Activated CD4-positive, alpha-beta memory T cell treated with anti-CD3 and anti-CD28 coated beads, Interleukin-2, amount 10 ng/mL, durations not matched to agents 7 days and 5 days (primary cell): ENCODE measurements at regions of chr6 and their contacts with region 1.

Region 1: GRCh38 chr6:36851149-36851614 is 11.9 kb upstream of the CPNE5 start:
- DNase-seq: peak; percentile 46
- H3K4me3 Mint-ChIP-seq: no peak overlapping the region
- H3K27ac Mint-ChIP-seq: no peak overlapping the region
- H3K4me1 Mint-ChIP-seq: peaks cover 5% of the 10 kb centered on the region
- H3K27me3 Mint-ChIP-seq: no peaks in the 10 kb centered on the region

Region 2: DNA sequence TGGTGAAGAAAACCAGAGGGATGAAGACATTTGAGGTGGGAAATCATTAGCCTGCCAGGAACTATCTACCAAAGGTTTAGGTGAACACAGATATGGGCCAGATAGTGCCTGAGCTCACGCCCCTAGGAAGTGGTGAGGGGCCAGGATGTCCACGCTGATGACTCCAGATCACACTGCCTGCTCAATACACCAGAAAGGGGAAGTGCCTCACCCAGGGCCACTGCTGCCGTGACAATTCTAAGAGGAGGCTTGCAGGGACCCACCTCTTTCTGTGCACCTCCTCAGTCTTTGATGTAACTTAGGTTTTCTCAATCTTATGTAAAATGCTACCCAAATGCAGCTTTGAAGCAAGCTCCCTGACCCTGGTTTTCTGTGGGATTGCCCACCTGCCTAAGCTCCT is 159.0 kb before region 1 on chr6:
- CTCF ChIA-PET with region 1: no interaction called
- POLR2A ChIA-PET with region 1: no interaction called
- DNase-seq: peak; percentile 82
- H3K4me3 Mint-ChIP-seq: peak overlapping the region; percentile 8
- H3K27ac Mint-ChIP-seq: peak overlapping the region; percentile 86
- H3K4me1 Mint-ChIP-seq: peaks cover 68% of the 10 kb centered on the region
- H3K27me3 Mint-ChIP-seq: no peaks in the 10 kb centered on the region

Region 3: GRCh38 chr6:36834576-36835341 is 16.4 kb before region 1 on chr6:
- CTCF ChIA-PET with region 1: interaction called, 12 read pairs
- POLR2A ChIA-PET with region 1: interaction called, 5 read pairs
- DNase-seq: no peak
- H3K4me3 Mint-ChIP-seq: no peak overlapping the region
- H3K27ac Mint-ChIP-seq: no peak overlapping the region
- H3K4me1 Mint-ChIP-seq: peaks cover 4% of the 10 kb centered on the region
- H3K27me3 Mint-ChIP-seq: peaks cover 28% of the 10 kb centered on the region

Region 4: DNA sequence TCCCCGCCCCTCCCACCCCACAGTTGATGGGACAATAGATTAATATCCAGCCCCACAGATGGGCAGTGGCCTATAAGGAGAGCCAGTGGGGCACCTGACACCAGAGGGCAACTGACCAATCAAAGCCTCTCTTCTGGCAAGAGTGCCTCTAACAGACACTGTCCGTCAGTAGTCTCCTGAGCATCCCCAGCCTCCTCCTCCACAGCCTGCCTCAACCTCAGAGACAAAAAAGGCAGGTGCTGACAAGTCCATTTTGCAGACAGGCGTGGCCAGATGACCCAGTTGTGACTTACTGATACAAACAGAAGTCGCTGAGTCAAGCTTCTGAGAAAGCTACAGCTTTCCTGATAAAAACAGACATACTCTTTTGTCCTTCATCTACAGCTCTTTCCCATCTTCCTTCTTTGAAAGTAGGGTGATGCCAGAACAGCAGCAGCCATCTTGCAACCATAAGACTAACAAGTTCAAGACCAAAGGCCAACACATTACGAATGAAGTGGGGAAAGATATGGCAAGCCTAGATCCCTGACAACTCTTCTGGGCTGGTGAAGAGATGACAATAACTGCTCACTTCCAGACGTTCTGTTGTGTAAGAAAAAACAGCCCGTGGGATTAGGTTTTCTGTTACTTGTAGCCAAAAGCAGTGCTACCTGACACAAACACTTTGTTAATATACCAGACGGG is 11.1 kb after region 1 on chr6:
- CTCF ChIA-PET with region 1: interaction called, 16 read pairs
- POLR2A ChIA-PET with region 1: interaction called, 6 read pairs
- DNase-seq: peak; percentile 31
- H3K4me3 Mint-ChIP-seq: no peak overlapping the region
- H3K27ac Mint-ChIP-seq: peak overlapping the region; percentile 71
- H3K4me1 Mint-ChIP-seq: peaks cover 58% of the 10 kb centered on the region
- H3K27me3 Mint-ChIP-seq: no peaks in the 10 kb centered on the region

Region 5: DNA sequence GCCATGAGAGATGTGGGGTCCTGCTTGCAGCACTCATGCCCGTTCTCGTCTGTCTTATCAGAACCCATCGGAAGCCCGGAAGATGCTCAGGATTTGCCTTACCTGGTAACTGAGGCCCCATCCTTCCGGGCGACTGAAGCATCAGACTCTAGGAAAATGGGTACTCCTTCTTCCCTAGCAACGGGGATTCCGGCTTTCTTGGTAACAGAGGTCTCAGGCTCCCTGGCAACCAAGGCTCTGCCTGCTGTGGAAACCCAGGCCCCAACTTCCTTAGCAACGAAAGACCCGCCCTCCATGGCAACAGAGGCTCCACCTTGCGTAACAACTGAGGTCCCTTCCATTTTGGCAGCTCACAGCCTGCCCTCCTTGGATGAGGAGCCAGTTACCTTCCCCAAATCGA is 111.7 kb after region 1 on chr6:
- CTCF ChIA-PET with region 1: no interaction called
- POLR2A ChIA-PET with region 1: no interaction called
- DNase-seq: peak; percentile 86
- H3K4me3 Mint-ChIP-seq: no peak overlapping the region
- H3K27ac Mint-ChIP-seq: peak overlapping the region; percentile 55
- H3K4me1 Mint-ChIP-seq: peaks cover 49% of the 10 kb centered on the region
- H3K27me3 Mint-ChIP-seq: no peaks in the 10 kb centered on the region